Activated CD8-positive, alpha-beta T cell treated with anti-CD3 and anti-CD28 coated beads, Interleukin-2, amount 10 ng/mL, durations not matched to agents 7 days and 5 days (primary cell): ENCODE measurements at regions of chr13 and their contacts with region 1.

Region 1: DNA sequence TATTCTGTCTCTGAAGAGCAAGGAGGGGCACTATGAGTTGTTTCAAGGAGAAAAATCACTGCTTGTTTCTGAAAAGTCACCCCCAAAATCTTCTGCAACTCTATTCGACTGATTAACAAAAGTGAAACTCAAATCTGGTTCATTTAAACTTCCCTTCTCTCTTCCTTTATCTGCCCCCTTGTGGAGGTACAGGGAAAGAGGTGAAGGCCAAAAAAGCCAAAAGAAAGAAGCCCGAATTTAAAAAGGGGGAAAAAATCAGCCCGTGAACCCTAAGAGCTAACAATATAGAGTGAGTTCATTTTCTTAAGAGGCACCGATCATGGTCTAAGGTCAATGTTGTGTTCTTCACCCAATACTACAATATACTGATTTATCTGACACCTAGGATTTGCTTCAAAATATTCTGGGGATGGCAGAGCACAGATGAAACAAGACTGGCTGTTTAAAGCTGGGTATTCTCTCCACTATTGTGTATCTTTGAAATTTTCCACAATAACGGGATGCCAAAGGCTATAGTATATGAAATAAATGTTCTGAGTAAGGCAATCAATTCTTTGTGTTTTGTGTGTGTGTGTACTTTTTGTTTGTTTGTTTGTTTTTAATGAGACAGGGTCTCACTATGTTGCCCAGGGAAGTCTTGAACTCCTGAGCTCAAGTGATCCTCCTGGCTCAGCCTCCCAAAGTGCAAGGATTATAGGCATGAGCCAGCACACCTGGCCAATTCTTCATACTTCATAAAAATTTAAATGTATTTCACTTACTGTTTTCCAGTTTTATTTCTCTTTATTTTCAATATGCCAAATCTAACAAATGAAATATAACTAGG is 55.0 kb upstream of the EEF1AKMT1 start:
- DNase-seq: peak; percentile 62
- ATAC-seq: peak; percentile 84
- H3K4me3 Mint-ChIP-seq: peak overlapping the region; percentile 44
- H3K27ac Mint-ChIP-seq: peak overlapping the region; percentile 54
- H3K4me1 Mint-ChIP-seq: peaks cover 9% of the 10 kb centered on the region
- H3K27me3 Mint-ChIP-seq: no peaks in the 10 kb centered on the region

Region 2: DNA sequence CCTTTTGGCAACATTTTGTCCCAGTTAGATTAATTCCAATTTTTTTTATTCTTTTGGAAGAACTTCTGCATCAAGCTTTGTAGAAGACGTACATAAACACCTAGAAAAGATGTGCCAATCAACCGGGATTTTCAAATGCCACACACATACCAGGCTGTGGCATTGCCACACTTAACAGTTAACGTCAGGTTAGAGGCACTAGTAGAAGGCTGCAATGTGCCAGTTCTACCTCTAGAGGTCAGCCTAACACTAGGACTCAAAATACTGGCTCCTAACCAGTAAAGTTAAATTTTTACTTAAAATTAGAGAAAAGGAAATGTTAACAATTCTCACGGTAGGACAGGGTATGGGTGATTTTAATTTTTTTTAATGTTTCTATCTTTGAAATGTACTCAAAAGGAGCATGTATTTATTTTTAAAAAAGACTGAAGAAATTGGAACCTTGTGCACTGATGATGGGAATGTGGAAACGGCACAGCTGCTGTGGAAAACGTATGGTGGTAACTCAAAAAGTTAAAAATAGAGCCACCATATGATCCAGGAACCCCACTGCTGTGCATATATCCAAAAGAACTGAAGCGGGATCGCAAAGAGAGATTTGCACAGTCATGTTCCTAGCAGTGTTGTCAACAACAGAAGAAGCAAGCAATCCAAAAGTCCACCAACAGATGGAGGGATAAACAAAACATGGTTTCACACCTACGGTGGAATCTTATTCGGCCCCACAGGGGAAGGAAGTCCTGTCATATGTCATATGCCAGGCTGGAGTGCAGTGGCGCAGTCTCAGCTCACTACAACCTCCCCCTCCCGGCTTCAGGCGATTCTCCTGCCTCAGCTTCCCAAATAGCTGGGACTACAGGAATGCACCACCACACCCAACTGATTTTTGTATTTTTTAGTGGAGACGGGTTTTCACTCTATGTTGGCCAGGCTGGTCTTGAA is 333.4 kb before region 1 on chr13:
- CTCF ChIA-PET with region 1: interaction called, 79 read pairs
- POLR2A ChIA-PET with region 1: no interaction called
- DNase-seq: peak; percentile 79
- ATAC-seq: peak; percentile 76
- H3K4me3 Mint-ChIP-seq: no peak overlapping the region
- H3K27ac Mint-ChIP-seq: no peak overlapping the region
- H3K4me1 Mint-ChIP-seq: peaks cover 11% of the 10 kb centered on the region
- H3K27me3 Mint-ChIP-seq: no peaks in the 10 kb centered on the region

Region 3: GRCh38 chr13:20676213-20676612 is 152.5 kb before region 1 on chr13:
- CTCF ChIA-PET with region 1: no interaction called
- POLR2A ChIA-PET with region 1: no interaction called
- DNase-seq: no peak
- ATAC-seq: no peak
- H3K4me3 Mint-ChIP-seq: no peak overlapping the region
- H3K27ac Mint-ChIP-seq: no peak overlapping the region
- H3K4me1 Mint-ChIP-seq: no peaks in the 10 kb centered on the region
- H3K27me3 Mint-ChIP-seq: no peaks in the 10 kb centered on the region

Region 4: GRCh38 chr13:20713751-20714150 is 115.0 kb before region 1 on chr13:
- CTCF ChIA-PET with region 1: interaction called, 14 read pairs
- POLR2A ChIA-PET with region 1: no interaction called
- DNase-seq: no peak
- ATAC-seq: no peak
- H3K4me3 Mint-ChIP-seq: no peak overlapping the region
- H3K27ac Mint-ChIP-seq: no peak overlapping the region
- H3K4me1 Mint-ChIP-seq: peaks cover 4% of the 10 kb centered on the region
- H3K27me3 Mint-ChIP-seq: peaks cover 10% of the 10 kb centered on the region

Region 5: DNA sequence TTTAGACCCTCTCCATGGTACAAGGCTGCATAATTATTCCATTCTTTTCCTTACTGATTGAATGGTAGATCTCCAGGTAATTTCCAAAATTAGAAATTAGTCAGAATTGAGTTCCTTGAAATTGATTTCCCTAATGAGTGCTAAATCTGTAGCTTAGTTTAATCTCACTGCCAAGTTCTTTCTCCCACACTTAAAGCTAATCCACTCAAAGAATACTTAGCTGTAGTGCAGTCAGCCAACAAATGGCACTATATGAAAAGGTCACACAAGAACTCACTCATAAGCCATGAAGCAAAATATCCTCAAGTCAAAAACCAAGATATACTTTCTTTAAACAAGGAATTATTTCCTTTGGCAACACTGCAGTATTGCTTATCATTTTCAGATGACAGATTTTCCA is 11.8 kb after region 1 on chr13:
- CTCF ChIA-PET with region 1: interaction called, 26 read pairs
- POLR2A ChIA-PET with region 1: interaction called, 3 read pairs
- DNase-seq: no peak
- ATAC-seq: no peak
- H3K4me3 Mint-ChIP-seq: no peak overlapping the region
- H3K27ac Mint-ChIP-seq: no peak overlapping the region
- H3K4me1 Mint-ChIP-seq: peaks cover 1% of the 10 kb centered on the region
- H3K27me3 Mint-ChIP-seq: no peaks in the 10 kb centered on the region

Region 6: DNA sequence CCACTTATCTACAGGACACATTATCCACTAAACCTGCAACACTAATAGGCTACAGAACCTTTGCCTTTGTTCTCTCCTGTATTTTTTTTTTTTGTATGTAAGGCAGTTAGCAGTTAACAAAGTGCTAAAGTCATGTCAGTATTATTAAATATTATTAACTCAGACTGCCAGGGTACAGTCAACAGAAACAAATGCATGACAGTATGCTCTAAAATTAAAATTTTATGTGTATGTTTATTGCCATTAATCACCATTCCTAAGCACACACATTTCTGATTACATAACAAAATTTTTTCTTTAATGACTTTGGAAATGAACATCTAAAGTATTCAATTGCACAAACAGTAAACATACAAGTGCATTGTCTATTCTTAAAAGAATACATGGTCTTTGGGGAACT is 32.1 kb after region 1 on chr13:
- CTCF ChIA-PET with region 1: interaction called, 11 read pairs
- POLR2A ChIA-PET with region 1: no interaction called
- DNase-seq: no peak
- ATAC-seq: no peak
- H3K4me3 Mint-ChIP-seq: no peak overlapping the region
- H3K27ac Mint-ChIP-seq: peak overlapping the region; percentile 7
- H3K4me1 Mint-ChIP-seq: peaks cover 5% of the 10 kb centered on the region
- H3K27me3 Mint-ChIP-seq: no peaks in the 10 kb centered on the region